ENCODE measurements at regions of chr3 and their contacts with region 1.

Region 1: DNA sequence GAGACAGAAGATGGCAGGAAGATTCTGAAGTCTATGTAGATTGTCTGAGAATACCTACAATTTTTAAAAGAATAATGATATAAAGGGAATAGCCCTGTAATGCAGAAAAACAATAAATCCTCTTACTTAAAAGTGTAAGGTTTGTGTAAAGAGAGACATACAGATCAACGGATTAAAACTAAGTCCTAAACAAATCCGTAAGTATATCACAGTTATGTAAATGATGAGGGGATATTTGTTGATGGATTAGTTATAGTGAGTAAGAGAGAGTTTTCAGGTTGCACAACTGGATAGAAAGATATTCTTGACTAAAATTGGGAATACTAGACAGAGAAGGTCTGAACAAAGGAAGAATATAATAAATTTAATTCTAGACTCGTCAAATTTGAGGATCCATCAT is 179.6 kb downstream of the TBC1D5 start:
- DNase-seq: no peak
- ATAC-seq: no peak
- H3K4me3 ChIP-seq: no peak overlapping the region
- H3K27ac ChIP-seq: no peak overlapping the region
- H3K4me1 ChIP-seq: no peaks in the 10 kb centered on the region
- H3K27me3 ChIP-seq: no peaks in the 10 kb centered on the region
- CTCF ChIP-seq: no peak
- POLR2A ChIP-seq: no peak
- RAD21 ChIP-seq: no peak

Region 2: GRCh38 chr3:16917256-16917935 is 645.4 kb before region 1 on chr3:
- CTCF ChIA-PET with region 1: no interaction called
- POLR2A ChIA-PET with region 1: no interaction called
- dilution Hi-C with region 1: no loop called
- in situ Hi-C with region 1: no loop called
- intact Hi-C with region 1: loop called (anchors 5 kb)
- DNase-seq: peak; percentile 73
- ATAC-seq: peak; percentile 32
- H3K4me3 ChIP-seq: no peak overlapping the region
- H3K27ac ChIP-seq: no peak overlapping the region
- H3K4me1 ChIP-seq: no peaks in the 10 kb centered on the region
- H3K27me3 ChIP-seq: no peaks in the 10 kb centered on the region
- CTCF ChIP-seq: no peak
- POLR2A ChIP-seq: no peak
- RAD21 ChIP-seq: no peak

Region 3: GRCh38 chr3:17544632-17545031 is 18.2 kb before region 1 on chr3:
- CTCF ChIA-PET with region 1: no interaction called
- POLR2A ChIA-PET with region 1: no interaction called
- dilution Hi-C with region 1: no loop called
- in situ Hi-C with region 1: no loop called
- intact Hi-C with region 1: loop called (anchors 2 kb)
- DNase-seq: peak; percentile 1
- ATAC-seq: no peak; the same call in 1 of the 2 replicates
- H3K4me3 ChIP-seq: no peak overlapping the region
- H3K27ac ChIP-seq: no peak overlapping the region
- H3K4me1 ChIP-seq: no peaks in the 10 kb centered on the region
- H3K27me3 ChIP-seq: no peaks in the 10 kb centered on the region
- CTCF ChIP-seq: peak; percentile 27; the same call in 1 of the 2 replicates
- POLR2A ChIP-seq: no peak
- RAD21 ChIP-seq: peak; percentile 39